Activated naive CD4-positive, alpha-beta T cell treated with anti-CD3 and anti-CD28 coated beads for 36 hours (primary cell): ENCODE measurements at regions of chr11 and their contacts with region 1.

Region 1: GRCh38 chr11:118530408-118531339 is at the start of gene TMEM25:
- DNase-seq: peak; percentile 75
- H3K4me3 Mint-ChIP-seq: peak within 1 kb of the TSS; percentile 95
- H3K27ac Mint-ChIP-seq: no peak within 1 kb of the TSS
- H3K4me1 Mint-ChIP-seq: peaks cover 30% of the 10 kb centered on the region
- H3K27me3 Mint-ChIP-seq: no peaks in the 10 kb centered on the region
- total RNA-seq, gene TMEM25: 13.3 to 14.1 TPM

Region 2: GRCh38 chr11:118565051-118565450 is 34.4 kb after region 1 on chr11:
- CTCF ChIA-PET with region 1: no interaction called
- intact Hi-C with region 1: loop called (anchors 1 kb)
- DNase-seq: no peak
- H3K4me3 Mint-ChIP-seq: peak overlapping the region; percentile 70
- H3K27ac Mint-ChIP-seq: no peak overlapping the region
- H3K4me1 Mint-ChIP-seq: peaks cover 24% of the 10 kb centered on the region
- H3K27me3 Mint-ChIP-seq: no peaks in the 10 kb centered on the region

Region 3: GRCh38 chr11:119205574-119206510 is 675.2 kb after region 1 on chr11 and contains the start of gene CBL:
- CTCF ChIA-PET with region 1: no interaction called
- intact Hi-C with region 1: no loop called
- DNase-seq: peak; percentile 99
- H3K4me3 Mint-ChIP-seq: peak within 1 kb of the TSS; percentile 93
- H3K27ac Mint-ChIP-seq: peak within 1 kb of the TSS; percentile 88
- H3K4me1 Mint-ChIP-seq: peaks cover 29% of the 10 kb centered on the region
- H3K27me3 Mint-ChIP-seq: no peaks in the 10 kb centered on the region
- total RNA-seq, gene CBL: 25.3 to 25.7 TPM